Activated T-helper 2 cell treated with anti-CD3 and anti-CD28 coated beads, Interferon-gamma antibody, Interleukin-2, Interleukin-4, amounts not matched to agents 10 μg/mL and 5 μg/mL and 100 μg/mL, durations not matched to agents 14 hours and 24 hours and 36 hours (primary cell): ENCODE measurements at regions of chr17 and their contacts with region 1.

Region 1: DNA sequence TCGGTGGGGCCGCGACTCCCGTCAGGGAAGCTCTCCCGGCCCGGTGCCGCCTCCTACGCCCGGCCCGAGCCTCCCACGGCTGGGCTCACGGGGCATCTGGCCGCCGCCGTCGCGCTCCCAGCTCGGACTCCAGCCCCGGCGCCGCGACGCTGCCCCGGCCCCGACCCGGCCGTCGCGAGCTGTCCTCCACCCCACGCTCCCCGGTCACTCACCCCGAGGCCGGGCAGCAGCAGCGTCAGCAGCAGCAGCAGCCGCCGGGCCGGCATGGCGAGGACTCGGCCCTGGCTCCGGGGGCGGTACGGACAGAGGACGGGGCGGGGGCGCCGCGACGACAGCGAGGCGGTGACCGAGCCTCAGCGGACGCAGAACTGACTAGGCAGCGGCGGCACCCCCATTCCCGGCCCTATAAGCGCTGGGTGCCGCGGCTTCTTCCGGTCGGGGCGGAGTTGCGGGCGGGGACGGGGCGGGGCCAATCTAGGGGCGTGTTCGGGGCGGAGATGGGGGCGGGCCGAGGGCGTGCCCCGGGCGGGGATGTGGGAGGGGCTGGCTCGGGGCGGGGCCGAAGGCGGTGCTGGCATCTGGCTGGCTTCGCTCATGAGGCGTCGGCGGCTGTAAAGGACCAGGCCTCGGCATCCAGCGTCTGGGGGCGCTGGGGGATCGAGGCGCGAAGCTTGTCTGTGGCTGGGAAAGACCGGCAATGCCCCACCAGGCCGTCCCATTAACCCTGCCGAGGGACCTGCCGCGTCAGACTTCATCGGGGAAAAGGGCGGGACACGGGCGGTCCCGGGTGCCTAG is at the start of gene ERN1:
- DNase-seq: peak; percentile 87
- H3K4me3 Mint-ChIP-seq: peak within 1 kb of the TSS; percentile 91
- H3K27ac Mint-ChIP-seq: peak within 1 kb of the TSS; percentile 88
- H3K4me1 Mint-ChIP-seq: peaks cover 52% of the 10 kb centered on the region
- H3K27me3 Mint-ChIP-seq: no peaks in the 10 kb centered on the region
- total RNA-seq, gene ERN1: 91.0 and 93.4 TPM in 2 replicates

Region 2: GRCh38 chr17:64025732-64026294 is 104.1 kb before region 1 on chr17:
- intact Hi-C with region 1: loop called (anchors 1 kb)
- DNase-seq: peak; percentile 88
- H3K4me3 Mint-ChIP-seq: peak overlapping the region; percentile 74
- H3K27ac Mint-ChIP-seq: peak overlapping the region; percentile 93
- H3K4me1 Mint-ChIP-seq: peaks cover 63% of the 10 kb centered on the region
- H3K27me3 Mint-ChIP-seq: no peaks in the 10 kb centered on the region

Region 3: DNA sequence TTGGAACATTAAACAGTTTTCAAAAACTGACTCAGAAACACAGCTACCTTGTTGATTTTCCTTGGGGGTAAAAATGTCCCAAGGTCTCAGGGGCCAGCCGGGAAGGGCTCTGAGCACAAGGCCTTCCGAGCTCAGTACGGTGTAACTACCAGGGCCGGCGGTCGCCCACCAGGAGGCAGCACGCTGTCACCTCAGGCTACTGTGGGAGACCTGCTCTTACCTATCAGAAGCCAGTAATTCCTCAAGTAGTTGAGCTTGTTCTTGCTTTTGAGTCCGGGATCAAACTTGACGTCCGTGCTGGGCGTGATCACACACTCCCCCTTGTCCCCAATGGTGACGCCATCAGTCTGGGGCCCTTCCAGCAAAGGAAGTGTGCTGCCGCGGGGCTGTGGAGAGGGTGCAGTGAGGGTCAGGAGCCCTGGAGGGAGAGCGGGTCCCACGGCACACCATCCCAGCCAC is 66.2 kb before region 1 on chr17:
- intact Hi-C with region 1: loop called (anchors 1 kb)
- DNase-seq: no peak
- H3K4me3 Mint-ChIP-seq: no peak overlapping the region
- H3K27ac Mint-ChIP-seq: peak overlapping the region; percentile 30
- H3K4me1 Mint-ChIP-seq: peaks cover 80% of the 10 kb centered on the region
- H3K27me3 Mint-ChIP-seq: no peaks in the 10 kb centered on the region

Region 4: GRCh38 chr17:64103391-64104364 is 26.3 kb before region 1 on chr17:
- intact Hi-C with region 1: no loop called
- DNase-seq: no peak
- H3K4me3 Mint-ChIP-seq: no peak overlapping the region
- H3K27ac Mint-ChIP-seq: peak overlapping the region; percentile 24
- H3K4me1 Mint-ChIP-seq: peaks cover 62% of the 10 kb centered on the region
- H3K27me3 Mint-ChIP-seq: no peaks in the 10 kb centered on the region

Region 5: DNA sequence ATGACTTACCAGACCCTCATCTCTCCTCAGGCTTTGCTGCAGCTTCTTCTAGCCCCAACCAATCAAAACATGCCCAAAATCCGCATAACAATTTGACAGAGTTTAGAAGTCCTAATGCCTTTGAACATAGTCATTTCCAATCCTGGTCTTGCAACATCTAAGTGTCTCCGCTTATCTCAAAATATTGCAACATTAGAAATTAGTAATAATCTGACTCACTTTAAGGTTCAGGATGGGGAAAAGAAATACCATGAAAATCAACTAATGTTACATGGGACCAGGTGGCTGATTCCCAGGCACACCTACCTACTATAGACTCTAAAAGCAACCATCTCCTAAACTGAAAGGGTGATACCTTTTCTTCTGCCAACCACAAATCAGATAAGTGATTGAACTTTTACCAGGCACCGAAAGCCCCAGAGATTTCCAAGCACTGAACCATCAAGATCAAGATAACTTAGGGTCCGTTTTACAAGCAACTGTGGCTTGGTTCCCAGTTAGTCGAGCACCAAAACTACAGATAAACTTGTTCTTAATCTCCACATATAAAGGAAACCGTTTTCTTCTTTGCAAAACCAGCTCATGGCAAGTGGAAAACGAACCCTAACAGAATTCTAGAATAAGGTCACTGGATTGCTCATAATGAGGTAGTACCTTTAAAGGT is 14.0 kb before region 1 on chr17:
- intact Hi-C with region 1: loop called (anchors 1 kb)
- DNase-seq: peak; percentile 26
- H3K4me3 Mint-ChIP-seq: peak overlapping the region; percentile 50
- H3K27ac Mint-ChIP-seq: peak overlapping the region; percentile 90
- H3K4me1 Mint-ChIP-seq: peaks cover 67% of the 10 kb centered on the region
- H3K27me3 Mint-ChIP-seq: no peaks in the 10 kb centered on the region

Region 6: DNA sequence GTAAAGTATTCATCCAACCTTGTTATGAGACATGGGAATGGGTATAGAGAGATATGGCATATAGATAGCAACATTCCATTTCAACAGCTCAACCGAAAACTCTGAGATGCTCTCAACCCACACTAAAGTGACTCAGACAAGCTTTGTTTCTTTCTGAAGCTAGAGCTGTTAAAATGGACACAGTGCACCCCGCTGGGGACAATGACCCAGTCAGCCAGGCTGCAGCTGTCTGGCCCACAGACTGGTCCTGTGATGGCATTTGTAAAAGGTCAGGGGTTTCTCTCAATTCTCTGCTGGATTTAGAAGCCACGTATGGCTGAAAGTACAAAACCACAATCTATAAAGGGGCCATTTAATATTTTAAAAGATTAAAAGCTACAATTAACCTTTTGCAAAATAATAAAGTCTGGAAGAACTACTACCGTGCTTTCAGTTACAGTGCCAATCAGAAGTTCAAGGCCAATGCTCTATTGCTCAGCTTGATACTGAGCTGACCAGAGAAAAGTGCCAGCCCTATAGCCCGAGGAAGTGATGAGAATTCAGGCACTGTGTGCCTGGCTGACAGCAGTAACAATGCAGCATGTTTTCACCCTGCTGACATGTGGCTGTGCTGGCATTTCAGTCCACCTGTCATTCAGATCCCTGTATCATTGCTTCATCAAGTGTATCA is 72.8 kb after region 1 on chr17:
- intact Hi-C with region 1: no loop called
- DNase-seq: no peak
- H3K4me3 Mint-ChIP-seq: no peak overlapping the region
- H3K27ac Mint-ChIP-seq: peak overlapping the region; percentile 60
- H3K4me1 Mint-ChIP-seq: peaks cover 45% of the 10 kb centered on the region
- H3K27me3 Mint-ChIP-seq: no peaks in the 10 kb centered on the region

Region 7: GRCh38 chr17:64262417-64263260 is 132.7 kb after region 1 on chr17 and contains the start of gene TEX2:
- intact Hi-C with region 1: loop called (anchors 5 kb)
- DNase-seq: peak; percentile 60
- H3K4me3 Mint-ChIP-seq: peak within 1 kb of the TSS; percentile 90
- H3K27ac Mint-ChIP-seq: peak within 1 kb of the TSS; percentile 85
- H3K4me1 Mint-ChIP-seq: peaks cover 28% of the 10 kb centered on the region
- H3K27me3 Mint-ChIP-seq: peaks cover 4% of the 10 kb centered on the region
- total RNA-seq, gene TEX2: 20.7 and 22.0 TPM in 2 replicates